ENCODE measurements at regions of chr7 and their contacts with region 1.

Region 1: GRCh38 chr7:51357821-51358220 is 41.2 kb upstream of the COBL start:
- DNase-seq: no peak

Region 2: GRCh38 chr7:51067757-51068156 is 290.1 kb before region 1 on chr7:
- intact Hi-C with region 1: no loop called
- DNase-seq: no peak

Region 3: DNA sequence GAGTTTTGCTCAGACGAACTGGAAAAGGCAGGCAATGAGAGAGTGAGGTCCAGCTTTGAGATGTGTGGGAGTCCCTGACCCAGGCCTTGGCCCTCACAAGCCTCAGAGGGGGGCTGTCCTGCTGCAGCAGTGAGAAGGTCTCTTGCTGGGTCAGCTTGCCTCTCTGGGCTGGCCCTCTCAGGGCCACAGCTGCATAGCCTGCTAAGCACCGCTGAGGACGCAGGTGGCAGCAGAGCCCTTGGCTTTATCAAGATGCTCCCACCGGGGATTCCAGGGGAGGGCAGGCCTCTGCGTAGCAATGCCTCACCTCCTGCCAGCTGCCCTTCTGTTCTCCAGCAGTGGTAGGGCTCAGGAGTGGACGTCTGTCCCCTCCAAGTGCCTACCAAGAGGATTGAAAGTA is 169.9 kb before region 1 on chr7:
- intact Hi-C with region 1: loop called (anchors 5 kb)
- DNase-seq: no peak

Region 4: GRCh38 chr7:51253161-51253560 is 104.7 kb before region 1 on chr7:
- intact Hi-C with region 1: no loop called
- DNase-seq: no peak

Region 5: DNA sequence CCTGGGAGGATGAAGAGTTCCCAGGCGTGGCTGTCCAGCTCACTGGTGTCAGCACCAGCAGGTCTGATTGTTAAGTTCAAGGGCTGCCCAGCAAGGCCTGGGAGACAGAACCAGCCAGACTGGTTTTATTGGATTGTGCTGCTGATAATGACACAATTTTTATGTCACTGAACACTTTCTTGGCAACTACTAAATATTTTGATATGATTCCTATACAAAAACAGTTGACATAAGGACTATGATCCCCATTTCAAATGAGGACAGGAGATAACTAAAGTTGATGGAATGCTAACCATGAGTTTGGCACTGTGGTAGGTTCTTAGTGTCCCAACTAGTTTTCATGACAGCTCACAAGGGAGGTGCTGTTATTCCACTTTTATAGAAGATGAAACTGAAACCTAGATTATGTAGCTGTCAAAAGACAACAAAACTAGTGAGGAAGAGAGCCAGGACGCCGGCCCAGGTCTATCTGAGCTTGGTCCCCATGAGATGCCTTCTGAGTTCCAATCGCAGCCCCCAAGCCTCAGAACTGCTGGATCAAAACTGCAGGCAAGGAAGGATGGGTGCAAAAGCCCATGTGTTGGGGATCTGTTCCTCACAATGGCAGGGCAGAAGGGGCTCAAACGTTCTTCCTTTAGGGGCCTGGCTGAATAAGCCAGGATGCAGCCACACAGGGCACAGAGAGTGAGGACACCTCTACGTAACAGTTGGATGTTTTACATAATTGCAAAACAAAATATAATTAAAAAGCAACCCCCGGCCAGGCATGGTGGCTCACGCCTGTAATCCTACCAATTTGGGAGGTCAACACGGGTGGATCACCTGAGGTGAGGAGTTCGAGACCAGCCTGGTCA is 94.0 kb before region 1 on chr7:
- intact Hi-C with region 1: loop called (anchors 5 kb)
- DNase-seq: no peak

Measured in cardiac septum (tissue), 1 donor.